ENCODE measurements at regions of chr14 and their contacts with region 1.

Region 1: GRCh38 chr14:54566410-54567223 is at the start of gene SAMD4A:
- DNase-seq: peak; percentile 95
- ATAC-seq: peak; percentile 33
- H3K4me3 ChIP-seq: peak within 1 kb of the TSS; percentile 85
- H3K27ac ChIP-seq: peak within 1 kb of the TSS; percentile 79
- H3K4me1 ChIP-seq: peaks cover 42% of the 10 kb centered on the region
- H3K27me3 ChIP-seq: no peaks in the 10 kb centered on the region
- CTCF ChIP-seq: peak; percentile 53; the same call in 1 of the 2 replicates
- total RNA-seq, gene SAMD4A: 42.9 and 45.2 TPM in 2 replicates

Region 2: DNA sequence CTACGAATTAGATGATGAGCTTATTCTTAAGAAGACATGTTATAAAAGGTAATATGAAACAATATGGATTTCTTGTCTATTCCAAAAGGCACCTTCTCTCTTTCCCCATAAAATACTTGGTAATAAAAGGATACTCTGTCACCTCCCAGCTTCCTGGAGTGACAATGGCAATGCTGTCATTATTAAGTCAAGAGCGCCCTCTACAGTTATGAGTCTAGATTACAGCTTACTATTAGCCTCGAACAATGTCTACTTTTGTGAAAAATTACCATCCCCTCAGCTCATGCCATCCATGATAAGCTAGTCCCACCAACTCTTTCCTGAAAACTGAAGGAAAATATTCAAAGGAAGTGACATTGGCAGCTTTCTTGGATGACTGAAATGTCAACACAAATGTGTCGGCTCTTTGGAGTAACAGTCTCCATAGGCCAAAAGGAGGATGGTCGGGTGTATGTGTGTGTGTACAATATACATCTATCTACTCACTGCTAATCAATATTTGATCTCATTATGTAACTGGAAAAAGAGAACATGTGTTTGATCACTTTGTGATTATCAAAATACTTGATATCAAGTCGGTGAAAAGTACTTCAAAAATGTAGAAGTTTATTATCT is 218.5 kb before region 1 on chr14:
- CTCF ChIA-PET with region 1: no interaction called
- POLR2A ChIA-PET with region 1: no interaction called
- intact Hi-C with region 1: no loop called
- DNase-seq: peak; percentile 99
- ATAC-seq: peak; percentile 70
- H3K4me3 ChIP-seq: no peak overlapping the region
- H3K27ac ChIP-seq: no peak overlapping the region
- H3K4me1 ChIP-seq: peaks cover 19% of the 10 kb centered on the region
- H3K27me3 ChIP-seq: no peaks in the 10 kb centered on the region
- CTCF ChIP-seq: peak; percentile 99

Region 3: GRCh38 chr14:54509546-54510501 is 56.8 kb before region 1 on chr14 and contains the start of gene CGRRF1:
- CTCF ChIA-PET with region 1: interaction called, 5 read pairs
- POLR2A ChIA-PET with region 1: interaction called, 23 read pairs
- intact Hi-C with region 1: loop called (anchors 2 kb)
- DNase-seq: peak; percentile 100
- ATAC-seq: peak; percentile 97
- H3K4me3 ChIP-seq: peak within 1 kb of the TSS; percentile 89
- H3K27ac ChIP-seq: no peak within 1 kb of the TSS
- H3K4me1 ChIP-seq: peaks cover 19% of the 10 kb centered on the region
- H3K27me3 ChIP-seq: no peaks in the 10 kb centered on the region
- CTCF ChIP-seq: peak; percentile 67
- total RNA-seq, gene CGRRF1: 31.3 and 31.5 TPM in 2 replicates

Region 4: DNA sequence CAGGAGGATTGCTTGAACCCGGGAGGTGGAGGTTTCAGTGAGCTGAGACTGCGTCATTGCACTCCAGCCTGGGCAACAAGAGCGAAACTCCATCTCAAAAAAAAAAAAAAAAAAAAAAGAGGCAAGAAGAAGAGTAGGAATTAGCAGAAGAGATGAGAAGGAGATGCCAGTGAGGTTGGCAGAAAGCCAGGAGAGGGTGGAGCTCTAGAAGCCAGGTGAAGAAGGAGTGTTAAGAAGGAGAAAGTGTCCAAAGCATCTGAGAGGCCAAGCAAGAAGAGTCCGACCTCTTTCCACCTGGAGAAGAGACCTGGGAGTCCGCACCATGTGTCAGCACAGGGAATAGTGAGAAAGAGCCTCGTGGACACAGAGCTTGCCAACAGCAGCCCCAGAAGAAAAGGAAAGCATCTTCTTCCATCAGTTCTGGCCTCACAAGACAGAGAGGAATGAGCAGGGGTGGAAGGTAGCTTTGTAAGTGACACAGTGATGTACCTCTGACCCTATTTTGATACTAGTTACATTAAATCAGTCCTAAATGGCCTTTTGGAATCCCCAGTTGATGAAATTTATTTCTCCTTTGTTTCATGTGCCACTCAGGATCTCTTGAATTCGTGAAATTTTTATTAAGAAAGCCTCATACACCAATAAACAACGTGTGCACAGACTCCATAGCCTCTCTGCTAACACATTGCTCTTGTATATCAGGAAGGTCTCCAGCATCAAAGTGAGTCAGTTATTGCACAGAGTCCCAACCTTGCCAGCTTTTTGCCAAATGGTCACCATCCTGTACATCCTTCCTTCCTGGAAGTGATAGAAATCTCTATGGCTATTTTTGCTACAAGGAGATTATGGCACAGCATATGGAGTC is 70.9 kb after region 1 on chr14:
- CTCF ChIA-PET with region 1: interaction called, 7 read pairs
- POLR2A ChIA-PET with region 1: interaction called, 28 read pairs
- intact Hi-C with region 1: no loop called
- DNase-seq: peak; percentile 42
- ATAC-seq: peak; percentile 83
- H3K4me3 ChIP-seq: peak overlapping the region; percentile 4; the same call in 1 of the 2 replicates
- H3K27ac ChIP-seq: peak overlapping the region; percentile 81
- H3K4me1 ChIP-seq: peaks cover 32% of the 10 kb centered on the region
- H3K27me3 ChIP-seq: no peaks in the 10 kb centered on the region
- CTCF ChIP-seq: no peak

Region 5: DNA sequence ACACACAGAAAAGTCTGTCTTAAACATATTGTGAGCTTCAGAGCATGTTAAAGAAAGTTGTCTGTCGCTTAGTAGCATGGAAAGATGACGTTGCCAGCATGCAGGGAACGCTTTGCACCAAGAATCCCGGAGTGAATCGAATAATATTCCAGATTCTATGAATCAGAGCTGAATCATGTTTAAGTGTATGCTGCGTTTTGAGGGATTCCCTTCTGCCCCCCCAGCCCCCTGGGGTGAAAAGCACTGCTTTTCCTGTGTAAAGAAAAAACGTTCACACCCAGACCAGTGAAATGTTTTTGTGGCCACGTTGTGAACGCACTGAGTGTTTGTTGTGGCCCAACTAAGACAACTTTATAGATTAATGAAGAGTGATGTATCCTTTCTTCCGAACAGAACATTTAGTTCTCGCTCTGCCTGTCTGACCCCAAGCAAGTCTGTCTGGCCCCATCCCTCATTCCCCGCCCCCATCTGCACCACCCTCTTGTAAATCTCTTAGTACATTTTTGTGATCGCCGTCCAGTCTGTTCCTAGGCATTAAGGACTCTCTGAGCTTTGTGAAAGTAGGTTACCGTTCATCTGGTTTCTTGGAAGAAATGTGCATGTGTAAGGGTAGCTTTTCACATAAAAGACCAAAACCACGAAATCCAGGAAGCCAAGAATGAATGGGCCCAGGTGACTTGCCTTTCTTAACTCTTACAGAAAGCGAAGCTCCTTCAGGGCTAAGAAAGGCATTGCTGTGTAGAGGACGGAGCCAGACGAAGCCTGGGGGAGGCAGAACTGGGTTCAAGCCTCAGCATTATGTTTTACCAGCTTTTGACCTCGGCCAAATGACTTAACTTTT is 103.3 kb after region 1 on chr14:
- CTCF ChIA-PET with region 1: interaction called, 6 read pairs
- POLR2A ChIA-PET with region 1: interaction called, 30 read pairs
- intact Hi-C with region 1: no loop called
- DNase-seq: peak; percentile 99
- ATAC-seq: peak; percentile 77
- H3K4me3 ChIP-seq: peak overlapping the region; percentile 34
- H3K27ac ChIP-seq: peak overlapping the region; percentile 81
- H3K4me1 ChIP-seq: peaks cover 56% of the 10 kb centered on the region
- H3K27me3 ChIP-seq: no peaks in the 10 kb centered on the region
- CTCF ChIP-seq: no peak

Region 6: DNA sequence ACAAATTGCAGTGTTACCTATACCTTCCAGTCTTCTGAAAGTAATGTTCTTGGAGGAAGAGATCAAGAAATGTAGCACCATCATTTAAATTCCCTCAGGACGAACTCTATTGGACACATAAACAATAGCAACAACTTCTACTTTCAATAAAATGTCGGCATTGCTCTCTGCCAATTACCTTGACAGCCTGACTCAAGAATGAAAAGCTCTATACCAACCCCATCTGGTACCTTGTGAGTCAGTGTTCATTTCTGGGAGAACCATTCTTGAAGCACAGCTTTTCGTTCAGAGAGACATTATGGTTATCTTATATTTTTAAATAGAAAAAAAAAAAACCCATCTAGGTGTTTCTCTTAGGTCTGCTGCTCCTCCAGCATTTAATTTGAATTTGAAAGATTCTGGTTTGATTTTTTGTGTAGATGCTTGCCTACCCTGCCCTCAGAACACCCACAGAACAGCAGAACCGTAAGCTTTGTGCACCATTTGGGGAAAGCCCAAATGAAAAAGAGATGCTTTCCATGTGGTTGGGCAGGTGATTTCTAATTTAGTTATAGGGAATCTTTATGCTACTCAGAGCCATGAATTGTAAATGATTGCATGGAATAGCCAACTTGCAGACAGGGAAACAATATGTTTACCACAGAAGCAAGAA is 156.3 kb after region 1 on chr14:
- CTCF ChIA-PET with region 1: interaction called, 9 read pairs
- POLR2A ChIA-PET with region 1: interaction called, 13 read pairs
- intact Hi-C with region 1: no loop called
- DNase-seq: peak; percentile 79
- ATAC-seq: peak; percentile 85
- H3K4me3 ChIP-seq: no peak overlapping the region
- H3K27ac ChIP-seq: no peak overlapping the region
- H3K4me1 ChIP-seq: peaks cover 4% of the 10 kb centered on the region; the same call in 1 of the 2 replicates
- H3K27me3 ChIP-seq: no peaks in the 10 kb centered on the region
- CTCF ChIP-seq: peak; percentile 85

Region 7: DNA sequence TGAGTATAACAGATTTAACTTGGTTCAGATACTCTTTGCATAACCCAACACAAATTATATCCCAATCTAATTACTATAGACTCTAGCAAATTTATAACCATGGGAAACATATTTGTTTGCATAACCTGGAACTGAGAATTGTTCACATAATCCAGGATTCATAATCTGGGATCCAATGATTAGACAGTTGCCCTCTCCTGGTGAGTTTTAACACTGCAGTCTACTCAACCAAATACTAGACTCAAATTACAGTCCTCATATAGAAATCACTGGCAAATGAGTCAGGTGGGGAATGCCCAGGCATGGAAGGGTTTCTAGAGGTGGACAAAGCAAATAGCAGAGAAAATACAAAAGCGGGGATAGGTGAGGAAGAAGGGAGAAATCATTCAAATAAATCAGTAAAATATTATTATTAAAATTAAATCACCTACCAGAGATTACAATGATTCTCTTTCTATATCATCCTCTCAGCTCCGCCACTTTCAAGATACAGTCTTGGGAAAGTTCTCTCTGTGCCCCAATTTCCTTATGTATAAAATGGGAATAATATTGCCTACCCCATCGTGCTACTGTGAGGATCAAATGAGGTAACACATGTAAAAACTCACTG is 326.6 kb after region 1 on chr14:
- CTCF ChIA-PET with region 1: no interaction called
- POLR2A ChIA-PET with region 1: no interaction called
- intact Hi-C with region 1: loop called (anchors 1 kb)
- DNase-seq: peak; percentile 99
- ATAC-seq: peak; percentile 65
- H3K4me3 ChIP-seq: no peak overlapping the region
- H3K27ac ChIP-seq: no peak overlapping the region
- H3K4me1 ChIP-seq: peaks cover 9% of the 10 kb centered on the region; the same call in 1 of the 2 replicates
- H3K27me3 ChIP-seq: no peaks in the 10 kb centered on the region
- CTCF ChIP-seq: peak; percentile 97

Measured in PC-3 (cell line).